MCF 10A (cell line): ENCODE measurements at regions of chr3 and their contacts with region 1.

Region 1: DNA sequence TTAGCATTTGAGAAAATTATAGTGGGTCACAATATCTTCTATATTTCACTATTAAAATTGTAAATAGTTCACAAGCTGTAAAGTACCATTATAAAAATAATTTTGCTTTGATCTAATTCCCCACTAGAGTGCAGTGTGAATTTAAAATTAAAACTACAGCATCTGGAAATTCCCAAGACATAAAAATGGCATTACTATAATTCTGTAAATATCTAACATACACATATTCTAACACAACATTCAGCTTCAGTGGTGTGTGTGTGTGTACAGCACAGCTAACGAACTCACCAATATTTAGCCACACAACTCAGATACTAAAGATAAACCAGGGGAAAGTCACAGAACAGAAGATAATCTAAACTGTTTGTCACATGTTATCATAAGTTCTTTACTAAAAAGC is 424.9 kb upstream of the ZNF385D start:
- DNase-seq: peak; percentile 7
- H3K4me3 Mint-ChIP-seq: no peak overlapping the region
- H3K27ac Mint-ChIP-seq: no peak overlapping the region
- H3K4me1 Mint-ChIP-seq: peaks cover 5% of the 10 kb centered on the region
- H3K27me3 Mint-ChIP-seq: no peaks in the 10 kb centered on the region
- CTCF ChIP-seq: peak; percentile 33

Region 2: GRCh38 chr3:22565393-22565792 is 389.4 kb after region 1 on chr3:
- CTCF ChIA-PET with region 1: interaction called, 5 read pairs
- POLR2A ChIA-PET with region 1: no interaction called
- intact Hi-C with region 1: loop called (anchors 1 kb)
- DNase-seq: no peak
- H3K4me3 Mint-ChIP-seq: no peak overlapping the region
- H3K27ac Mint-ChIP-seq: no peak overlapping the region
- H3K4me1 Mint-ChIP-seq: peaks cover 5% of the 10 kb centered on the region
- H3K27me3 Mint-ChIP-seq: no peaks in the 10 kb centered on the region
- CTCF ChIP-seq: no peak

Region 3: DNA sequence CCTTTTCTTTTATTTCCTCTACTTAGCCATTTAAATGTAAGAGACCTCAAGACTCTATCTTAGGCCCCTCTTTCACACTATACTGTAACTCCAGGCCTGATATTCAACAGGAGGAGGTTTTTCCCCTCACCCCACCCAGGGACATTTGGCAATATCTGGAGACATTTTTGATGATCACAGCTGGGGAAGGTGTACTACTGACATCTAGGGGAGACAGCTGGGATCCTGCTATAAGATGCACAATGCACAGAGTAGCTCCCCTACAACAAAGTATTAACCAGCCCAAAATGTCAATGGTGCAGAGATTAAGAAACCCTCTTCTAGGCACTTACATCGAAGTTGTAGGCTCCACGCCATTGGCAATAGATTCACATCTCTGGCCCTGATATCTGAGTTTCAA is 509.6 kb after region 1 on chr3:
- CTCF ChIA-PET with region 1: interaction called, 19 read pairs
- POLR2A ChIA-PET with region 1: interaction called, 3 read pairs
- intact Hi-C with region 1: loop called (anchors 1 kb)
- DNase-seq: peak; percentile 45
- H3K4me3 Mint-ChIP-seq: no peak overlapping the region
- H3K27ac Mint-ChIP-seq: no peak overlapping the region
- H3K4me1 Mint-ChIP-seq: no peaks in the 10 kb centered on the region
- H3K27me3 Mint-ChIP-seq: no peaks in the 10 kb centered on the region
- CTCF ChIP-seq: peak; percentile 57

Region 4: DNA sequence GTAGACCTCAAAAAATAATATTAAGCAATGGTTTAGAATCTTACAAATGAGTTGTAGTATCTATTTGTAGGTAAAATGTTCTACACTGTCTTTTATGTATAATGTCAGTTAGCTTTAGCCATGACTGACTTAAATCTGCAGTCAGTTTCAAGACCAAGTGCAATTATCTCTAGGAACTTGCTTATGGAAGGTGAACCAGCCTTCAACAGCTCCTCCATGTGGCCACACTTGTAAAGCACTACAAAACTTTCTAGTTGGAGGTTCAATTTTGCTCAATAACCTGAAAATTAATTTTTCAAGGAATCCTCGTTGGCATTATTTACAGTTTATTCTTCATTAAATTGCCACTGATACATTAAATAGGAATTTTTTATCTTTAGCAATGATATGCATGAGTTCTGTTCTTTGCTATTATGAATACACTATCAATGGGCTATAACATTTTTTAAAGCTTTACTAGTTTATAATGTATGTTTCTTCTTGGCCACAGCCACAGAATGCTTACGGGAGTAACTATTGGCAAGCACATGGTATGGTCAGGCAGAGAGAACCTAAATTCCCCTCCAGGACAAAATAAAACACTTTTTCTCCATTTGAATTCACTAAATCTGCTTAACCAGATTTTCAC is 711.8 kb after region 1 on chr3:
- CTCF ChIA-PET with region 1: interaction called, 34 read pairs
- POLR2A ChIA-PET with region 1: no interaction called
- intact Hi-C with region 1: loop called (anchors 1 kb)
- DNase-seq: peak; percentile 56
- H3K4me3 Mint-ChIP-seq: no peak overlapping the region
- H3K27ac Mint-ChIP-seq: no peak overlapping the region
- H3K4me1 Mint-ChIP-seq: no peaks in the 10 kb centered on the region
- H3K27me3 Mint-ChIP-seq: peaks cover 22% of the 10 kb centered on the region
- CTCF ChIP-seq: peak; percentile 79

Region 5: GRCh38 chr3:22960105-22960984 is 784.4 kb after region 1 on chr3:
- CTCF ChIA-PET with region 1: interaction called, 21 read pairs
- POLR2A ChIA-PET with region 1: no interaction called
- intact Hi-C with region 1: loop called (anchors 1 kb)
- DNase-seq: peak; percentile 61
- H3K4me3 Mint-ChIP-seq: no peak overlapping the region
- H3K27ac Mint-ChIP-seq: no peak overlapping the region
- H3K4me1 Mint-ChIP-seq: no peaks in the 10 kb centered on the region
- H3K27me3 Mint-ChIP-seq: peaks cover 15% of the 10 kb centered on the region
- CTCF ChIP-seq: peak; percentile 81